Endothelial cell of umbilical vein (primary cell): ENCODE measurements at regions of chr6 and their contacts with region 1.

Region 1: GRCh38 chr6:158220786-158221442 is 52.8 kb downstream of the GTF2H5 start:
- DNase-seq: peak; percentile 78
- H3K4me3 ChIP-seq: no peak overlapping the region
- H3K27ac ChIP-seq: no peak overlapping the region
- H3K4me1 ChIP-seq: no peaks in the 10 kb centered on the region
- H3K27me3 ChIP-seq: no peaks in the 10 kb centered on the region
- CTCF ChIP-seq: peak; percentile 79 to 94
- POLR2A ChIP-seq: no peak

Region 2: GRCh38 chr6:157941101-157941863 is 279.6 kb before region 1 on chr6:
- CTCF ChIA-PET with region 1: no interaction called
- POLR2A ChIA-PET with region 1: no interaction called
- dilution Hi-C with region 1: no loop called
- intact Hi-C with region 1: no loop called
- DNase-seq: no peak
- H3K4me3 ChIP-seq: no peak overlapping the region
- H3K27ac ChIP-seq: no peak overlapping the region
- H3K4me1 ChIP-seq: no peaks in the 10 kb centered on the region
- H3K27me3 ChIP-seq: no peaks in the 10 kb centered on the region
- CTCF ChIP-seq: no peak
- POLR2A ChIP-seq: no peak

Region 3: GRCh38 chr6:158161566-158162255 is 59.2 kb before region 1 on chr6:
- CTCF ChIA-PET with region 1: no interaction called
- POLR2A ChIA-PET with region 1: no interaction called
- dilution Hi-C with region 1: no loop called
- intact Hi-C with region 1: no loop called
- DNase-seq: no peak
- H3K4me3 ChIP-seq: no peak overlapping the region
- H3K27ac ChIP-seq: no peak overlapping the region
- H3K4me1 ChIP-seq: no peaks in the 10 kb centered on the region
- H3K27me3 ChIP-seq: no peaks in the 10 kb centered on the region
- CTCF ChIP-seq: no peak
- POLR2A ChIP-seq: no peak

Region 4: GRCh38 chr6:158408552-158409130 is 187.7 kb after region 1 on chr6:
- CTCF ChIA-PET with region 1: interaction called, 10 read pairs
- POLR2A ChIA-PET with region 1: no interaction called
- dilution Hi-C with region 1: no loop called
- intact Hi-C with region 1: no loop called
- DNase-seq: peak; percentile 95
- H3K4me3 ChIP-seq: no peak overlapping the region
- H3K27ac ChIP-seq: peak overlapping the region; percentile 94
- H3K4me1 ChIP-seq: peaks cover 54% of the 10 kb centered on the region
- H3K27me3 ChIP-seq: no peaks in the 10 kb centered on the region
- CTCF ChIP-seq: no peak
- POLR2A ChIP-seq: peak; percentile 61

Region 5: DNA sequence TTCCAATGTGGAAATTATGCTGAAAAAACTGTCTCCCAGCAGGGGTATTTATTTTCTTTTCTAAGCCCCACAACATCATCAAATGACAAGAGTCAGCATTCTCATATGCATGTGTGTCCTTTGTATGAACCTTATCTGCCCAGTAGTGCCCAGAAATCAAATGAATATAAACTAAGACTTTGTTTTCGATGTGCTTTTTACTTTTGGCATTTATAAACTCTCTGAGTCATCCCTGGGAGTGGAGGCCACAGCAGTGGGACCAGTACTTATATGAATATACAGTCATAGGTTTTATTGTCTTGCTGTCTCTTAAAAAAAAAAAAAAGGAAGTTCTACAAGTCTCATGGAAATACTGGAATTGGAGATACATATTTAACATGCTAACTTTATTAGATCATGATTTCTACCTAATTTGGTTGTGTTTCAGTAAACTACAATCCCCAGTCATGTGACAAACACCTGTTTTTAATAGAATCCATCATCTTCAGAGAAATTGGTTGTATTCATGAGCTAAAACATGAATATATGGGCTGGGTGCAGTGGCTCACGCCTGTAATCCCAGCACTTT is 239.8 kb after region 1 on chr6:
- CTCF ChIA-PET with region 1: interaction called, 11 read pairs
- POLR2A ChIA-PET with region 1: no interaction called
- dilution Hi-C with region 1: no loop called
- intact Hi-C with region 1: no loop called
- DNase-seq: peak; percentile 91
- H3K4me3 ChIP-seq: no peak overlapping the region
- H3K27ac ChIP-seq: peak overlapping the region; percentile 77
- H3K4me1 ChIP-seq: peaks cover 25% of the 10 kb centered on the region
- H3K27me3 ChIP-seq: no peaks in the 10 kb centered on the region
- CTCF ChIP-seq: no peak
- POLR2A ChIP-seq: no peak

Region 6: DNA sequence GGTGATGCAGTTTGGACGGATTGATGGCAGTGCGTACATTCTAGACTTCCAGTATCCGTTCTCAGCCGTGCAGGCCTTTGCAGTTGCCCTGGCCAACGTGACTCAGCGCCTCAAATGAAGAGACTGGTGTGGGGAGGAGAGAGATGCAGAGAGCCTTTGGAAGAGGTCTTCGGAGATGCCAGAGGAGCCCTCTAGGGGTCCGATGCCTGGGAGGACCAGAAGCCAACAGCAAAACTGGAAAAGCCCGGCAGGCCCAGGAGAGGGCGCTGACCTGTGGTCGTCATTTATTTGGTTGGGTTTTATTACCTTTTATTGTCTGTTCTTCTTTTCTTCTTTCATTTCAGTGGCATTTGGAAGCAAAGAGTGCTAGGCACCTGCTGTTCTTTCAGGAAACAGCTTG is 285.7 kb after region 1 on chr6:
- CTCF ChIA-PET with region 1: interaction called, 18 read pairs
- POLR2A ChIA-PET with region 1: no interaction called
- dilution Hi-C with region 1: no loop called
- intact Hi-C with region 1: no loop called
- DNase-seq: peak; percentile 8
- H3K4me3 ChIP-seq: no peak overlapping the region
- H3K27ac ChIP-seq: no peak overlapping the region
- H3K4me1 ChIP-seq: no peaks in the 10 kb centered on the region
- H3K27me3 ChIP-seq: no peaks in the 10 kb centered on the region
- CTCF ChIP-seq: peak; percentile 50 to 53
- POLR2A ChIP-seq: no peak

Region 7: GRCh38 chr6:158554611-158555361 is 333.9 kb after region 1 on chr6:
- CTCF ChIA-PET with region 1: interaction called, 10 read pairs
- POLR2A ChIA-PET with region 1: no interaction called
- dilution Hi-C with region 1: no loop called
- intact Hi-C with region 1: no loop called
- DNase-seq: peak; percentile 81
- H3K4me3 ChIP-seq: peak overlapping the region in 1 of 3 experiments; percentile 11
- H3K27ac ChIP-seq: peak overlapping the region; percentile 81
- H3K4me1 ChIP-seq: peaks cover 35% of the 10 kb centered on the region
- H3K27me3 ChIP-seq: no peaks in the 10 kb centered on the region
- CTCF ChIP-seq: no peak
- POLR2A ChIP-seq: no peak

Region 8: DNA sequence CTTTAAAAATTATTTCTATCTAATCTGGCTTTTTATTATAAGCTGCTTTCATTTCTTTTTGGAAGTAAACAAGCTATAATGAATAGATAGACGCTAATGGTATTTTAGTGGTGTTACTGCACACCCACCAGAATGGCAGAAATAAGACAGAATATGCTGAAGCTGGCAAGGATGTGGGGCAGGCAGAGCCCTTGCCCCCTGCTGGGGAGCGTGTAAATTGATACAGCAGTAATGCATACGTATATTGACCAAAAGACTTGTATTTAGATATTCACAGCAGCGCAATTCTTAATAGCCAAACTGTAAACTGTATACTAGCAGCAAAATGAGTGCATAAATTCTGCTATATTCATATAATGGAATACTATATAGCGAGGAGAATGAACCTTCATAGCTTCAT is 374.3 kb after region 1 on chr6:
- CTCF ChIA-PET with region 1: interaction called, 46 read pairs
- POLR2A ChIA-PET with region 1: no interaction called
- dilution Hi-C with region 1: no loop called
- intact Hi-C with region 1: no loop called
- DNase-seq: peak; percentile 24
- H3K4me3 ChIP-seq: no peak overlapping the region
- H3K27ac ChIP-seq: no peak overlapping the region
- H3K4me1 ChIP-seq: peaks cover 3% of the 10 kb centered on the region
- H3K27me3 ChIP-seq: no peaks in the 10 kb centered on the region
- CTCF ChIP-seq: peak; percentile 27 to 38
- POLR2A ChIP-seq: no peak

Region 9: DNA sequence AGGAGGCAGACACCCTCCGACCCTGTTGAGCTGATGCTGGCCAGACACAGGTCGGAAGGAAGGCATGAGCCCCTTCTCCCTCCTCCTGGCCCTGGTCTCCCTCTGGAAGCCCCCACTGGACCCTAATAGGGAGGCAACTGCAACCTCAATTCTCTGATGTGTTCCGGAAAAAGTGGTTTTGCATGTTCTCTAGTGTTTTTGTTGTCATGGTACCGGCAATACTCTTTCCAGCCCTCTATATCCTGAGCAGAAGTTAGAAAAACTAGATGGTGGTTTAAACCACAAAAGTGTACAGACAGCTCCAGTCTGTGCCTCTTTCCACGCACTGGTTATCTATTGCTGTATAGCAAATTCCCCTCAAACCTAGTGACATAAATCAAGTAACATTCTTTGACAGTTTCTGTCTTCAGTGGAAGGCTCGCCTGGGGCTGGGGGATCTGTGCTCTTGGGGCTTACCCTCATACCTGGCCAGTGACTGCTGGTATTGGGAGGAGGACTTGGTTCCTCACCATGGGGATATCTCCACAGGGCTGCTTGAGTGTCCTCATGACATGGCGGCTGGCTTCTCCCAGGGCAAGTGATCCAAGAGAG is 466.0 kb after region 1 on chr6:
- CTCF ChIA-PET with region 1: interaction called, 61 read pairs
- POLR2A ChIA-PET with region 1: no interaction called
- dilution Hi-C with region 1: no loop called
- intact Hi-C with region 1: no loop called
- DNase-seq: no peak
- H3K4me3 ChIP-seq: no peak overlapping the region
- H3K27ac ChIP-seq: no peak overlapping the region
- H3K4me1 ChIP-seq: peaks cover 3% of the 10 kb centered on the region
- H3K27me3 ChIP-seq: peaks cover 0 to 2% of the 10 kb centered on the region in 2 experiments
- CTCF ChIP-seq: no peak
- POLR2A ChIP-seq: no peak